Activated CD8-positive, alpha-beta memory T cell treated with anti-CD3 and anti-CD28 coated beads, Interleukin-2, amount 10 ng/mL, durations not matched to agents 7 days and 5 days (primary cell): ENCODE measurements at regions of chr19 and their contacts with region 1.

Region 1: DNA sequence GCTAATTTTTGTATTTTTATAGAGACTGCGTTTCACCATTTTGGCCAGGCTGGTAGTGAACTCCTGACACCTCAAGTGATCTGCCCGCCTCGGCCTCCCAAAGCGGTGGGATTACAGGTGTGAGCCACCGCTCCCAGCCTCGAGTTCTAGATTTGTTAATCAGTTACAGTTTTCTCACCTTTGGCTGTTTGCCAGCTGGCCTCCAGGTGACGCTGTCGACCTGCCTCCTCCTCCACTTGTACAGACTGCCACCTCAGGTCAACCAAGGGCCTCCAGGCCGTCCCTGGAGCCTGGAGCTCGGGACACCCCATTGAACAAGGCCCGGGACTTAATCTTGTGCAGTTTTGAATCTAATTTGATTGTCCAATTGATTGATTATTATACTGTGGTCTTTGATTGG is 45.5 kb downstream of the IER2 start:
- DNase-seq: peak; percentile 72
- ATAC-seq: peak; percentile 62
- H3K4me3 Mint-ChIP-seq: no peak overlapping the region
- H3K27ac Mint-ChIP-seq: no peak overlapping the region
- H3K4me1 Mint-ChIP-seq: peaks cover 22% of the 10 kb centered on the region
- H3K27me3 Mint-ChIP-seq: no peaks in the 10 kb centered on the region

Region 2: DNA sequence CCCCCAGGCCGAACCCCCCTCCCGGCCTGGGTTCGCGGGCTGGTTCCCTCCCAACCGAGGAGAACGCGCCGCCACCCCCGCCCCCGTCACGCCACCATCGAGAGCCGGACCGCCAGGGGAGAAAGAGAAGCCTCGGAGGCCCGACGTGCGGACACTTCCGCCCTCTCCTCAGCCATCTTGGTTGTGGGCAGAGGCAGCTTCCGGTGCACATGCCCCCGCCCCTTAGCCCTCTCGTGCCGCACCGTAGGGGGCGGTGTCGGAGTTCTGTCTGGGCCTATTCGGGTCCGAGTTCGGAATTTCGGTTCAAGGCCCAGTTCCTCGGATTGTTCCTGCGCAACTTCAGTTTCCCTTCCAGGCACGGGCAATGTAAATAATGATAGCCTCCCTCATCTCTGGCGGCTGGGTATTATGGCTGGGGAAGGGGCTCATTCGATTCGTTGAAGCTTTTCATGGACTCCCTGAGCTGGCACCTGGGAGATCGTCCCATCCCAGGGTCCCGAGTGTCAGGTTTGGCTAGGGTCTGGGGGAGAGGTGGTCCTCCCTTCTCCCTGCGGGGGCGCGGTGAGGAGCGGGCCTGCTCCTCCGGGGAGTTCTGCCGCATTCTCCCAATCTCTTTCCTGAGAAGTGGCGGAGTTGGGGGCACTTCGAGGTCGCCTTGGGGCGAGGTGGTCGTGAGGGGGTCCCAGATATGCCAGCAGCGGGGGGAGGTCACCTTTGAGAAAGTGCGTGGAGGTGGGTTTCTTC is 45.3 kb before region 1 on chr19 and contains the starts of genes IER2 and STX10:
- CTCF ChIA-PET with region 1: interaction called, 11 read pairs
- DNase-seq: peak; percentile 97
- ATAC-seq: peak; percentile 51
- H3K4me3 Mint-ChIP-seq: peak within 1 kb of the TSS; percentile 96
- H3K27ac Mint-ChIP-seq: peak within 1 kb of the TSS; percentile 91
- H3K4me1 Mint-ChIP-seq: peaks cover 19% of the 10 kb centered on the region
- H3K27me3 Mint-ChIP-seq: no peaks in the 10 kb centered on the region
- total RNA-seq, gene IER2: 148 to 209 TPM
- total RNA-seq, gene STX10: 58.6 to 70.1 TPM

Region 3: DNA sequence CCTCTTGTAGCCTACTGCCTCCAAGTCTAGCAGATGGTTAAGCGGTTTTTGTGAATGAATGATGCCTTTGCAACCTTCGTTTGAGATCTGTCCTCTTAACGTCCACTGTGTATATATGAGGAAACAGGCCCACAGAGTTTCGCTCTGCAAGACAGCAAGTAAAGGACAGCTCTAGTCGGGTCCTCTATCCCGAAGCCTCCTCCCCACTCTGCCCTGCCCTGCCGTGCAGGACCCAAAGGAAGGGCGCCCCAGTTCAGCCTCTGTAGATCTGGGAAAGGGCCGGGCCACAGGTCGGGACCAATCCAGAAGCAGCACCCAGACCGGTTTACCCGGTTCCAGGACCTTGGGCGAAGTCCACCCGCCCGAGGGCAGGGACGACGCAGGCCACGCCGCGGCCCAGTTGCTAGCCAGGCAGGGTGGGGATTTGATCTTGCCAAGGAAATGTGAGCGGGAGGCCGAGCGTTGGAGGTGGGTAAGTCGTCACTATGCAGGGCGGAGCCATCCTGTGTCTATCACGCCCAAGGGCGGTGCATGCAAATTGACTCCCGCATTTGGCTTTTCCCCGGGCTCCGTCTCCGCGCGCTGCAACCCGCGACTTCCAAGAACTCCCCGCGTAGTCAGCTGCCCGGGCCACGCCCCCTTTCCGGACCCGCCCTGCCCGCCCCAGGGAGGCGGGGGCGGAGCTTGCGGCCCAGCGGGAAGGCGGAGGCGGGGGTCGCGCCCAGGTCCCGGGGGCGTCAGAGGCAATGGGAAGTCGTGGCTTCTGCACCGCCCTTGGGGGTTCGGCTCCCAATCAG is 33.0 kb before region 1 on chr19:
- CTCF ChIA-PET with region 1: interaction called, 63 read pairs
- DNase-seq: peak; percentile 97
- ATAC-seq: peak; percentile 68
- H3K4me3 Mint-ChIP-seq: peak overlapping the region; percentile 86
- H3K27ac Mint-ChIP-seq: peak overlapping the region; percentile 95
- H3K4me1 Mint-ChIP-seq: peaks cover 77% of the 10 kb centered on the region
- H3K27me3 Mint-ChIP-seq: no peaks in the 10 kb centered on the region

Region 4: DNA sequence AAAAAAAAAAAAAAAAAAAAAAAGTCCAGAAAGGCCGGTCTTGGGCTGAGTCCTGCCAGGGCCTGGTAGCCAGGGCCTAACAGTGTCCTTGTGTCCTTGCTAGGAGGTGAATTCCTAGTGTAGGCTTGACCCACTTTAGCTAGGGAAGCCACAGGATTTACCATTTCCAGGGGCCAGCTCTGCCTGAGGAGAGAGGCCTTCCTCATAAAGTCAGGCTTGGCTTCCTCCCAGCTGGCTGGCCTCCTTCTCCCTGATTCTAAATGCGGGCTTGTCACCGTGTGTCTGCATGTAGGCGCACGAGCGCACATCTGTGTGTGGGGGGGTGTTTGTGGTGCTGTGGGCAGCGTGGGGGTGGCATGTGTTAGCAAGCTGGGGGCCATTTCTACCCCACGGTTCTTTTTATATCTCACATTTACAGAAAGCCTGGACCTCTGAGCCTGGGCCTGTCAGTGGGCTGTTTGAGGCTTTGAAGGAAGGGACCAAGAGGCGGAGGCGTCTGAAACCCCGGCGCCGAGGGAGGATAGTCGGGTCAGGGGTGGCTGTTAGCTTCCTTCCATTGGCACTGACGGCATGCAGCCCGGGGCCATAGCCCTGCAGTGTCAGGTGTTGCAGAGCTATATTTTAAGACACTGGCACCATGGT is 13.8 kb before region 1 on chr19:
- CTCF ChIA-PET with region 1: interaction called, 45 read pairs
- DNase-seq: peak; percentile 55
- ATAC-seq: peak; percentile 39
- H3K4me3 Mint-ChIP-seq: no peak overlapping the region
- H3K27ac Mint-ChIP-seq: peak overlapping the region; percentile 76
- H3K4me1 Mint-ChIP-seq: peaks cover 20% of the 10 kb centered on the region
- H3K27me3 Mint-ChIP-seq: no peaks in the 10 kb centered on the region

Region 5: GRCh38 chr19:13212759-13213330 is 17.2 kb after region 1 on chr19:
- CTCF ChIA-PET with region 1: interaction called, 31 read pairs
- DNase-seq: peak; percentile 85
- ATAC-seq: peak; percentile 59
- H3K4me3 Mint-ChIP-seq: no peak overlapping the region
- H3K27ac Mint-ChIP-seq: no peak overlapping the region
- H3K4me1 Mint-ChIP-seq: peaks cover 19% of the 10 kb centered on the region
- H3K27me3 Mint-ChIP-seq: no peaks in the 10 kb centered on the region

Region 6: GRCh38 chr19:13277104-13277809 is 81.6 kb after region 1 on chr19:
- CTCF ChIA-PET with region 1: interaction called, 29 read pairs
- DNase-seq: peak; percentile 78
- ATAC-seq: peak; percentile 90
- H3K4me3 Mint-ChIP-seq: peak overlapping the region; percentile 40
- H3K27ac Mint-ChIP-seq: peak overlapping the region; percentile 88
- H3K4me1 Mint-ChIP-seq: peaks cover 31% of the 10 kb centered on the region
- H3K27me3 Mint-ChIP-seq: no peaks in the 10 kb centered on the region